CD8-positive, alpha-beta memory T cell (primary cell): ENCODE measurements at regions of chr1 and their contacts with region 1.

Region 1: GRCh38 chr1:35451125-35451528 is 106.1 kb downstream of the KIAA0319L start:
- DNase-seq: peak; percentile 59 to 83 (median 60)
- H3K4me3 ChIP-seq: no peak overlapping the region
- H3K4me3 Mint-ChIP-seq: peak overlapping the region in 1 of 7 donors; percentile 15
- H3K27ac ChIP-seq: no peak overlapping the region
- H3K27ac Mint-ChIP-seq: peak overlapping the region; percentile 34 to 94 (median 82)
- H3K4me1 ChIP-seq: peaks cover 17% of the 10 kb centered on the region
- H3K4me1 Mint-ChIP-seq: peaks cover 10 to 37% (median 35%) of the 10 kb centered on the region in 3 donors
- H3K27me3 ChIP-seq: no peaks in the 10 kb centered on the region
- H3K27me3 Mint-ChIP-seq: no peaks in the 10 kb centered on the region

Region 2: DNA sequence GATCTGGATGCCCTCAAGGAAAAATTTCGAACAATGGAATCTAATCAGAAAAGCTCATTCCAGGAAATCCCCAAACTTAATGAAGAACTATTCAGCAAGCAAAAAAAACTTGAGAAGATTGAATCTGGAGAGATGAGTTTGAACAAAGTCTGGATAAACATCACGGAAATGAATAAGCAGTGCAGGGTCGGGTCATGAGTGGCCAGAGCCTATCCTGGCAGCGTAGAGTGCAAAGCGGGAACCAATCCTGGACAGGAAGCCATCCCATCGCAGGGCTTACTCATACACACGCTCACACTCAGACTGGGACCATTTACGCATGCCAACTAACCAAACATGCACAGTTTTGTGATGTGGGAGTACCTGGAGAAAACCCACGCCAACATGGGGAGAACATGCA is 328.8 kb before region 1 on chr1:
- CTCF ChIA-PET with region 1: no interaction called
- POLR2A ChIA-PET with region 1: no interaction called
- DNase-seq: no peak
- H3K4me3 ChIP-seq: no peak overlapping the region
- H3K4me3 Mint-ChIP-seq: no peak overlapping the region
- H3K27ac ChIP-seq: no peak overlapping the region
- H3K27ac Mint-ChIP-seq: peak overlapping the region in 1 of 8 donors; percentile 81
- H3K4me1 ChIP-seq: no peaks in the 10 kb centered on the region
- H3K4me1 Mint-ChIP-seq: peaks cover 8 to 16% (median 9%) of the 10 kb centered on the region in 3 donors
- H3K27me3 ChIP-seq: no peaks in the 10 kb centered on the region
- H3K27me3 Mint-ChIP-seq: peaks cover 6 to 8% of the 10 kb centered on the region in 2 donors

Region 3: DNA sequence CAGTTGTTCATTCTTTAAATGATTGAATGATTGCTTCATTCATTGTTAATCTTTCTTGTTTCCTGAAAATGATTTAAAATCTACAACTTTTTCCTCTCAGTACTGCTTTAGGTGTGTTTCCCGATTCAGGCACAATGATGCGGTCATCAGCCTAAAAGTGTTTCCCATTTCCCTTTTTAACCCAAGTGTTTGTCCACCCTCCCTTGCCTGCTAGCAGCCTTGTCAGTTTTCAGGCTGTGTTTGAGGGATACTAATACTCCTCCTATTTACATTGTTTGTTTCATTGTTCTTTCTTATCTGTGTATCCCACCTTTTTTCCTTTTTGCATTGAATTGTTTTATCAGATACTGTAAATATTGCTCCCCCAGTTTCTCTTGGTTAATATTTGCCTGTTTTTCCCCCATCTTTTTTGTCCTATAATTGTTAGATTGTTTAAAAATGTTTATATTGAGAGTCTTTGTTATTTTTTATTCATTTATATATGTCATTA is 25.0 kb before region 1 on chr1:
- CTCF ChIA-PET with region 1: no interaction called
- POLR2A ChIA-PET with region 1: no interaction called
- DNase-seq: no peak
- H3K4me3 ChIP-seq: no peak overlapping the region
- H3K4me3 Mint-ChIP-seq: no peak overlapping the region
- H3K27ac ChIP-seq: no peak overlapping the region
- H3K27ac Mint-ChIP-seq: peak overlapping the region in 5 of 8 donors; percentile 7 to 60 (median 20)
- H3K4me1 ChIP-seq: no peaks in the 10 kb centered on the region
- H3K4me1 Mint-ChIP-seq: peaks cover 0 to 2% (median under 1%) of the 10 kb centered on the region in 3 donors
- H3K27me3 ChIP-seq: no peaks in the 10 kb centered on the region
- H3K27me3 Mint-ChIP-seq: peaks cover 0 to 2% of the 10 kb centered on the region in 2 donors

Region 4: GRCh38 chr1:35511305-35511704 is 60.2 kb after region 1 on chr1:
- CTCF ChIA-PET with region 1: interaction called, 34 read pairs
- POLR2A ChIA-PET with region 1: interaction called, 3 read pairs
- DNase-seq: no peak
- H3K4me3 ChIP-seq: no peak overlapping the region
- H3K4me3 Mint-ChIP-seq: no peak overlapping the region
- H3K27ac ChIP-seq: no peak overlapping the region
- H3K27ac Mint-ChIP-seq: peak overlapping the region in 1 of 8 donors; percentile 27
- H3K4me1 ChIP-seq: peaks cover 32% of the 10 kb centered on the region
- H3K4me1 Mint-ChIP-seq: peaks cover 46 to 70% (median 66%) of the 10 kb centered on the region in 3 donors
- H3K27me3 ChIP-seq: no peaks in the 10 kb centered on the region
- H3K27me3 Mint-ChIP-seq: no peaks in the 10 kb centered on the region

Region 5: DNA sequence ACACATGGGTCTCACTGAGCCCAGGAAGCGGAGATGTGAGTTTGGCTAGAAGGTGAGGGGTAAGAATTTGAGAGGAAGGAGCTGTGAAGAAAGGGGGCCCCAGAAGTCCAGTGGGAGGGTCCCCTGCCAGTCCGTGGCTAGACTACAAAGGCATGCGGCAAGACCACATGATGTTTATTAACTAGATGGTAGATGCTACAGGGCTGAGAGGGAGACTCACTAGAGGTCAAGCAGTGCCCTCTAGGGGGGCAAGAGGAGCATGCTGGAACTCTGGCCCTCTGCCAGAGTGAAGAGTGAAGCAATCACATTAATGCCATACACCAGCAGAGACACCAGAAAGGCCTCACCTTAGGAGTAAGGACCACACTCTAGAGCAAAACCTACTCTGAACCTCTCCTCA is 93.9 kb after region 1 on chr1:
- CTCF ChIA-PET with region 1: interaction called, 63 read pairs
- POLR2A ChIA-PET with region 1: interaction called, 5 read pairs
- DNase-seq: peak; percentile 26 to 81 (median 41)
- H3K4me3 ChIP-seq: no peak overlapping the region
- H3K4me3 Mint-ChIP-seq: peak overlapping the region in 1 of 7 donors; percentile 36
- H3K27ac ChIP-seq: no peak overlapping the region
- H3K27ac Mint-ChIP-seq: peak overlapping the region; percentile 16 to 84 (median 41)
- H3K4me1 ChIP-seq: peaks cover 28% of the 10 kb centered on the region
- H3K4me1 Mint-ChIP-seq: peaks cover 54 to 81% (median 72%) of the 10 kb centered on the region in 3 donors
- H3K27me3 ChIP-seq: no peaks in the 10 kb centered on the region
- H3K27me3 Mint-ChIP-seq: no peaks in the 10 kb centered on the region

Region 6: GRCh38 chr1:35564037-35564883 is 113.1 kb after region 1 on chr1:
- CTCF ChIA-PET with region 1: interaction called, 110 read pairs
- POLR2A ChIA-PET with region 1: interaction called, 7 read pairs
- DNase-seq: peak; percentile 58 to 84 (median 70)
- H3K4me3 ChIP-seq: no peak overlapping the region
- H3K4me3 Mint-ChIP-seq: peak overlapping the region in 1 of 7 donors; percentile 29
- H3K27ac ChIP-seq: no peak overlapping the region
- H3K27ac Mint-ChIP-seq: peak overlapping the region in 7 of 8 donors; percentile 16 to 82 (median 58)
- H3K4me1 ChIP-seq: peaks cover 2% of the 10 kb centered on the region
- H3K4me1 Mint-ChIP-seq: peaks cover 17 to 43% (median 34%) of the 10 kb centered on the region in 3 donors
- H3K27me3 ChIP-seq: no peaks in the 10 kb centered on the region
- H3K27me3 Mint-ChIP-seq: no peaks in the 10 kb centered on the region

Region 7: GRCh38 chr1:35726450-35727433 is 275.6 kb after region 1 on chr1:
- CTCF ChIA-PET with region 1: interaction called, 25 read pairs
- POLR2A ChIA-PET with region 1: no interaction called
- DNase-seq: peak; percentile 21 to 71 (median 40)
- H3K4me3 ChIP-seq: no peak overlapping the region
- H3K4me3 Mint-ChIP-seq: peak overlapping the region in 1 of 7 donors; percentile 24
- H3K27ac ChIP-seq: no peak overlapping the region
- H3K27ac Mint-ChIP-seq: peak overlapping the region in 4 of 8 donors; percentile 4 to 47 (median 30)
- H3K4me1 ChIP-seq: no peaks in the 10 kb centered on the region
- H3K4me1 Mint-ChIP-seq: peaks cover 0 to 6% (median 5%) of the 10 kb centered on the region in 3 donors
- H3K27me3 ChIP-seq: no peaks in the 10 kb centered on the region
- H3K27me3 Mint-ChIP-seq: no peaks in the 10 kb centered on the region